ENCODE measurements at regions of chr4 and their contacts with region 1.

Region 1: GRCh38 chr4:151099229-151099975 is at the start of gene RPS3A:
- DNase-seq: peak; percentile 99
- H3K4me3 Mint-ChIP-seq: peak within 1 kb of the TSS; percentile 93
- H3K27ac Mint-ChIP-seq: peak within 1 kb of the TSS; percentile 100
- H3K4me1 Mint-ChIP-seq: peaks cover 49% of the 10 kb centered on the region
- H3K27me3 Mint-ChIP-seq: no peaks in the 10 kb centered on the region
- total RNA-seq, gene RPS3A: 3,192 to 3,296 TPM

Region 2: GRCh38 chr4:150828159-150828558 is 271.2 kb before region 1 on chr4:
- CTCF ChIA-PET with region 1: no interaction called
- POLR2A ChIA-PET with region 1: no interaction called
- intact Hi-C with region 1: loop called (anchors 1 kb)
- DNase-seq: peak; percentile 76
- H3K4me3 Mint-ChIP-seq: no peak overlapping the region
- H3K27ac Mint-ChIP-seq: peak overlapping the region; percentile 72
- H3K4me1 Mint-ChIP-seq: peaks cover 42% of the 10 kb centered on the region
- H3K27me3 Mint-ChIP-seq: no peaks in the 10 kb centered on the region

Region 3: DNA sequence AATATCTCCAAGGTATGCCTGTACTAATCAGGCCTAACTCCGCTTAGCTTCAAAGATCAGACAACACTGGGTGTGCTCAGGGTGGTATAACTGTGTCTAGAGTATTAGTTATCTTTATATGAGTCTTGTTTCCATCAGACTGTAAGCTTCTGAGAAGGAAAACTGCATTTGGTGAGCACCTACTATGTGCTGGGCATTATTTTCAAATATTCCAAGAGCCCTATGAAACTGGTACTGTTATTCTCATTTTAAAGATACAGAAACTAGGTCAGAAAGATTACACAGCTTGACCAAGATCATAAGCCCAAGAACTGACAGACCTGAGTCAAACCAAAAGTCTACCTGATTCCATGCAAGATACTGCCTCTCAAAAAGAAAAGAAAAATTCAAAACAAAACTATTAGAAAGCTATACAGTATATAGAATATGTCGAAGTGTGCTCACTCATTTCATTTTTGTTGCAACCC is 128.7 kb before region 1 on chr4:
- CTCF ChIA-PET with region 1: interaction called, 4 read pairs
- POLR2A ChIA-PET with region 1: interaction called, 3 read pairs
- intact Hi-C with region 1: loop called (anchors 2 kb)
- DNase-seq: no peak
- H3K4me3 Mint-ChIP-seq: no peak overlapping the region
- H3K27ac Mint-ChIP-seq: peak overlapping the region; percentile 10
- H3K4me1 Mint-ChIP-seq: peaks cover 59% of the 10 kb centered on the region
- H3K27me3 Mint-ChIP-seq: no peaks in the 10 kb centered on the region

Region 4: DNA sequence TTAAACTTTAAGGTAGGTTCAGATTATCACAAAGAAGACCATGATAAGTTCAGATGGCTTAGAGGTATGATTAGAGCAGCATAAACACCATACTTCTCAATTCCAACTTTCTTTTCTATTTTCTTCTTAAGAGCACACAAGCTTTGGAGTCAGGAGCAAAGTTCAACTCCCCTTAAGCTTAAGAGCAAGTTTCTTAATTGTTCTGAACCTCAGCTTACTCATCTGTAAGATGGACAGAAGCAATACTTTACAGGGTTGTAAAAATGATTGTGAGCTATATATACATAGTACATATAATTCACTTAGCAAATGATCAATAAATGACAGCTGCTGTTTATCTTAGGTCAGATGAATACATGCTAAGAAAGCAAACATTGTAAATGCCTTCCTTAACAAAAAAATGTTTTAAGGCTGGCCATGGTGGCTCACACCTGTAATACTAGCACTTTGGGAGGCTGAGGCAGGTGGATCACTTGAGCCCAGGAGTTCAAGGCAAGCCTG is 24.9 kb before region 1 on chr4:
- CTCF ChIA-PET with region 1: no interaction called
- POLR2A ChIA-PET with region 1: no interaction called
- intact Hi-C with region 1: loop called (anchors 1 kb)
- DNase-seq: no peak
- H3K4me3 Mint-ChIP-seq: no peak overlapping the region
- H3K27ac Mint-ChIP-seq: no peak overlapping the region
- H3K4me1 Mint-ChIP-seq: peaks cover 5% of the 10 kb centered on the region
- H3K27me3 Mint-ChIP-seq: peaks cover 2% of the 10 kb centered on the region

Region 5: DNA sequence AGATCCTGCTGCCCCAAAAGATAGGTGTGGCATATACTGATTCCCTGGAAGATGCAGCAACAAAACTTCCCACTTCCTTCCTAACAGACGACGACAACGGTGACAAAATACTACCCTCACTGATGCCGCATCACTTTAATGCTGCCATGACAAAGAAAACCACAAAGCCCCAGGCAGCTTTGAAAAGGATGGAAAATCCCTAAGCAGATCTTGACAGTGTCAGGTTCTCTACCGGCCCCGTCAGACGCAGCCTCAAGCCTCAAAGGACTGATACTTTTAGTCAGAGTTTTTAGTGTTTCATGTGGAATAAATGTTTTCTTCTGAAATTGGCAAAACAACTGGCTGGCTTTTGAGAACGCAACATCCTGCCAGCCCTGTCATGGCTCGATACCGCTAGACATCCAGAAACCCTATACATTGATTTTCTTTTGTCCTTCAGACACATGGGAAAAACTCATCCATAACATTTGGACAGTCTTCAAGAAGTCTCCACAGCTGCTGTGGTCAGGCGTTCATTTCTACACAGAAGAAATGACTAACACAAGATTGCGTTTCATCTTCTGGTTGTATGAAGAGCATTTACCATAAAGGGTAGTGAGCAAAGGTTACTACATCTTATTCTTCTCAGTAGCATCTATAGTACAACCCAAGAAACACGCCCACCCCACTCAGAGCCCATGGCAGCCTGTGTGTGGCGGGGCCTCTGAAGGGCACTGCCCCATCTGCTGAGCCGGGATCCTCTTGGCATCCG is 601.3 kb after region 1 on chr4:
- CTCF ChIA-PET with region 1: no interaction called
- POLR2A ChIA-PET with region 1: no interaction called
- intact Hi-C with region 1: no loop called
- DNase-seq: peak; percentile 63
- H3K4me3 Mint-ChIP-seq: no peak overlapping the region
- H3K27ac Mint-ChIP-seq: peak overlapping the region; percentile 75
- H3K4me1 Mint-ChIP-seq: peaks cover 8% of the 10 kb centered on the region
- H3K27me3 Mint-ChIP-seq: no peaks in the 10 kb centered on the region

Region 6: GRCh38 chr4:151760712-151761527 is 661.5 kb after region 1 on chr4 and contains the start of gene GATB:
- CTCF ChIA-PET with region 1: no interaction called
- POLR2A ChIA-PET with region 1: no interaction called
- intact Hi-C with region 1: loop called (anchors 1 kb)
- DNase-seq: peak; percentile 95
- H3K4me3 Mint-ChIP-seq: peak within 1 kb of the TSS; percentile 91
- H3K27ac Mint-ChIP-seq: peak within 1 kb of the TSS; percentile 64
- H3K4me1 Mint-ChIP-seq: peaks cover 13% of the 10 kb centered on the region
- H3K27me3 Mint-ChIP-seq: no peaks in the 10 kb centered on the region
- total RNA-seq, gene GATB: 16.1 to 16.5 TPM

Measured in activated CD4-positive, alpha-beta memory T cell treated with anti-CD3 and anti-CD28 coated beads for 36 hours (primary cell).